Heart left ventricle (tissue), 16 donors: ENCODE measurements at regions of chr2 and their contacts with region 1.

Region 1: DNA sequence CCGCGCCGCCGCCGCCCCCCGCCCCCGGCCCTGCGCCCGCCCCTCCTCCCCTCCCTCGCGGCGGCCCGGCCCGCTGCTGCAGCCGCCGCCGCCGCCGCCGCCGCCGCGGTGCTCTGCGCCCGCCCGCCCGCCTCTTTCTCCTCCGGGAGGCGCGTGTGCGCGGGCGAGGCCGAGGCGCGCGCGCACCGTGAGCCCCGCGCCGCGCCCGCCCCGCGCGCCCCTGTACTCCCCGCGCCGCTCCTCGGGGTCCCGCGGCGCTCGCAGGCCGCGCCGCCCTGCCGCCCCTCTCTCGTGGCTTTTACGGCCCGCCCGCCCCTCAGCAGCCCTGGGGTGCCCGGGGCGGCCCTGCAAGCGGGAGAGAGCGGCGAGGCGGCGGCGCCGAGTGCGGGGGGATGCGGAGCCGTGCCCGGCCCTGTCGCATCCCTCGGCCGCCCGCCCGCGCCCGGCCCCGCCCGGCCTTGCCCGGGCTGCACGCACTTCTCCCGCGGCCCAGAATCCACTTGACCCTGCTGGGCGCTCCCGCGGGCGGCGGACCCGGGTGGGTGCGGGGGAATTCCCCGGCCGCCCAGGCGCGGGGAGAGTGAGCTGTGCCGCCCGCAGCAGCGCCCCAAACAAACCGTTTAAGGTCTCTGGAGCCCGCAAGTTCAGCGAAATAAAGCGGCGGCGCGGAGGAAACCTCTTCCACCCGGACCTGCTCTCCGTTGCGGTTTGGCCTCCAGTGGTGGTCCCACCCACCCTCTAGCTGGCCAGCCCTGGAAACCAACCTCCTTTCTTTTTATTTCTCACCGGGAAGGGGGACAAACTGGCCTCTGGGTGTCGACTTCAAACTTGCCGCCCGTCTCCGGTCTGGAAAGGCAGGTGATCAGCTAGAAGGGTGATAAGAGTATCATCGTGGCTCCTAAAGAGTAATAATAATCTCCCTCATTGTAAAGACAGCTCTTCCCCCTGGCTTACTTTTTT is 37.4 kb downstream of the AFF3 start:
- DNase-seq: peak in 2 of 5 donors; percentile 45 to 61
- ATAC-seq: peak in 3 of 4 donors; percentile 47 to 69 (median 68)
- H3K4me3 ChIP-seq: peak overlapping the region; percentile 12 to 89 (median 62)
- H3K27ac ChIP-seq: peak overlapping the region in 8 of 12 donors; percentile 22 to 67 (median 53)
- H3K4me1 ChIP-seq: peaks cover 0 to 17% (median 7%) of the 10 kb centered on the region in 12 donors
- H3K27me3 ChIP-seq: peaks cover 0 to 12% (median 0%) of the 10 kb centered on the region in 9 donors
- CTCF ChIP-seq: no peak
- POLR2A ChIP-seq: no peak

Region 2: GRCh38 chr2:99725820-99726219 is 379.2 kb before region 1 on chr2:
- intact Hi-C with region 1: loop called in 1 of 10 experiments (anchors 5 kb)
- DNase-seq: no peak
- ATAC-seq: no peak
- H3K4me3 ChIP-seq: no peak overlapping the region
- H3K27ac ChIP-seq: no peak overlapping the region
- H3K4me1 ChIP-seq: peaks cover 3 to 37% (median 28%) of the 10 kb centered on the region in 12 donors
- H3K27me3 ChIP-seq: no peaks in the 10 kb centered on the region
- CTCF ChIP-seq: peak in 9 of 12 donors; percentile 20 to 58 (median 38)
- POLR2A ChIP-seq: no peak

Region 3: DNA sequence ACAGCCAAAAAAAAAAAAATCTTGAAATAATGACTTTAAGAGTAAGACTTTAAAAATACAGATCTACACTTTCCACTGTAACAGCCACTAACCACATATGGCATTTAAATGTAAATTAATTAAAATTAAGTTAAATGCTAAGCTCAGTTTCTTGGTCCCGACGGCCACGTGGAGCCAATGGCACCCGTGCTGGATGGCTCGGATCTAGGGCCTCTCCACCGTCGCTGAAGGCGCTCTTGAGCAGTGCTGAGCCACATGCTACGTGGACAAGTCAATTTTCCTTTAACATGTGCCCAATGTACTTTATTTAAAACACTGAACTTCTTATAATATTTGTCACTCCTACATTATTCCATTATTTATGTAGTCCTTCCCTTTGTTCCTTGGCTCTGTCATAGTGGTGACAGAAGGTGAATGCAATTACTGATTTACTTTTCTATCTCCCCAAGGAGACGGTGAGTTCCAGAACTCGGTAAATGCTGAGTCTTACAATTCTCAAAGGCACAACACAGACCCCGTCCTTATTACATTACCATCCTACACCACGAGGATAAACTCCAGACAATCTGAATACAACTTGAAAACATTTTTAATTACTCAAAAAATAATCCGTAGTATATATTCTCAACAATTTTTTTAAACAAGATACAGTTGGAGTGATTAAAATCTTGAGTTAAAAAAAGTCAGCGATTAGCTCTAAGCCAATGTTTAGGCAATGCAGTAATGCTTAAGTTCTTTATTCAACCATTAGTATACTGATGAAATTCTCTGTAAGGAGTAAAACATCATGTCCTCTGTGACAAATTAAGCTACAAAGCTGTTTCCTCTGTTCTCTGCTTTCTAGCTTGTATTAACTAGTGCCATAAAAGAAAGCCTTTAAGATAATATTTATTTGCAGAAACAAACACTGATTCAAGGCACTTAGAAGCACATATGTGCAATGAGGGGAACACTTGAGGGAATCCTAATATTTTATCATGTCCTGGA is 57.7 kb before region 1 on chr2:
- intact Hi-C with region 1: no loop called
- DNase-seq: no peak
- ATAC-seq: no peak
- H3K4me3 ChIP-seq: no peak overlapping the region
- H3K27ac ChIP-seq: no peak overlapping the region
- H3K4me1 ChIP-seq: no peaks in the 10 kb centered on the region
- H3K27me3 ChIP-seq: no peaks in the 10 kb centered on the region
- CTCF ChIP-seq: no peak
- POLR2A ChIP-seq: no peak

Region 4: DNA sequence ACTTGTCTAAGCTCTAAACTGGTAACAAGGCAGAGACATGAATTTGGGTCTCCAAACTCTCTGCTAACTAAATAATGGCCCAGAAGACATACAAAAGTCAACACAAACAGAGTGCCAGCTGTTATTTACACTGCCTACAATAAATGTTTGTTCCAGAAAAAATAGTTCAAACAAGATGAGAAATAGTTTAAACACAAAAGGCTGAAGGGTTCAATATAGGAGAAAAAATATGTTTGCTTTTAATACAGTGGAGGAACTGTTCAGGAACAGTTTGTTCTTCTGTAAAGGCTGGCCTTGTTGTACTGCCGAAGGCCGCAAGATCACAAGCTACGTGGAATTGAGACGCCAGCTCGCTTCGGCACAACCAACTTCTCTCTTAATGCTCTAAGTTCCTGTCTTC is 37.2 kb before region 1 on chr2:
- intact Hi-C with region 1: loop called in 1 of 10 experiments (anchors 2 kb)
- DNase-seq: no peak
- ATAC-seq: no peak
- H3K4me3 ChIP-seq: no peak overlapping the region
- H3K27ac ChIP-seq: no peak overlapping the region
- H3K4me1 ChIP-seq: peaks cover 0 to 36% (median 8%) of the 10 kb centered on the region in 12 donors
- H3K27me3 ChIP-seq: no peaks in the 10 kb centered on the region
- CTCF ChIP-seq: no peak
- POLR2A ChIP-seq: no peak

Region 5: GRCh38 chr2:100119235-100119634 is 14.2 kb after region 1 on chr2:
- intact Hi-C with region 1: no loop called
- DNase-seq: no peak
- ATAC-seq: no peak
- H3K4me3 ChIP-seq: no peak overlapping the region
- H3K27ac ChIP-seq: no peak overlapping the region
- H3K4me1 ChIP-seq: no peaks in the 10 kb centered on the region
- H3K27me3 ChIP-seq: no peaks in the 10 kb centered on the region
- CTCF ChIP-seq: no peak
- POLR2A ChIP-seq: no peak

Region 6: GRCh38 chr2:100142393-100142792 is 37.4 kb after region 1 on chr2 and contains the start of gene AFF3:
- intact Hi-C with region 1: no loop called
- DNase-seq: peak in 1 of 5 donors; percentile 46
- ATAC-seq: peak in 1 of 4 donors; percentile 55
- H3K4me3 ChIP-seq: peak within 1 kb of the TSS in 2 of 12 donors; percentile 7
- H3K27ac ChIP-seq: no peak within 1 kb of the TSS
- H3K4me1 ChIP-seq: no peaks in the 10 kb centered on the region
- H3K27me3 ChIP-seq: no peaks in the 10 kb centered on the region
- CTCF ChIP-seq: no peak
- POLR2A ChIP-seq: no peak
- total RNA-seq, gene AFF3: 2.2 to 15.5 (median 6.9) TPM

Region 7: GRCh38 chr2:100228967-100229366 is 124.0 kb after region 1 on chr2:
- intact Hi-C with region 1: loop called in 2 of 10 experiments (anchors 10 kb)
- DNase-seq: no peak
- ATAC-seq: no peak
- H3K4me3 ChIP-seq: no peak overlapping the region
- H3K27ac ChIP-seq: no peak overlapping the region
- H3K4me1 ChIP-seq: no peaks in the 10 kb centered on the region
- H3K27me3 ChIP-seq: no peaks in the 10 kb centered on the region
- CTCF ChIP-seq: peak in 2 of 12 donors; percentile 7 to 21
- POLR2A ChIP-seq: no peak